Naive thymus-derived CD4-positive, alpha-beta T cell (primary cell): ENCODE measurements at regions of chrX and their contacts with region 1.

Region 1: GRCh38 chrX:112678831-112679230 is 907 bp downstream of the LHFPL1 start:
- DNase-seq: peak in 1 of 9 donors; percentile 8
- ATAC-seq: no peak
- H3K4me3 ChIP-seq: peak overlapping the region; percentile 68
- H3K4me3 Mint-ChIP-seq: peak overlapping the region in 9 of 10 donors; percentile 76 to 87 (median 83)
- H3K27ac ChIP-seq: peak overlapping the region; percentile 69
- H3K27ac Mint-ChIP-seq: peak overlapping the region; percentile 68 to 95 (median 87)
- H3K4me1 ChIP-seq: peaks cover 10 to 13% of the 10 kb centered on the region in 2 donors
- H3K4me1 Mint-ChIP-seq: peaks cover 14 to 50% (median 48%) of the 10 kb centered on the region in 7 donors
- H3K27me3 ChIP-seq: no peaks in the 10 kb centered on the region
- H3K27me3 Mint-ChIP-seq: peaks cover 0 to 2% (median 0%) of the 10 kb centered on the region in 5 donors

Region 2: DNA sequence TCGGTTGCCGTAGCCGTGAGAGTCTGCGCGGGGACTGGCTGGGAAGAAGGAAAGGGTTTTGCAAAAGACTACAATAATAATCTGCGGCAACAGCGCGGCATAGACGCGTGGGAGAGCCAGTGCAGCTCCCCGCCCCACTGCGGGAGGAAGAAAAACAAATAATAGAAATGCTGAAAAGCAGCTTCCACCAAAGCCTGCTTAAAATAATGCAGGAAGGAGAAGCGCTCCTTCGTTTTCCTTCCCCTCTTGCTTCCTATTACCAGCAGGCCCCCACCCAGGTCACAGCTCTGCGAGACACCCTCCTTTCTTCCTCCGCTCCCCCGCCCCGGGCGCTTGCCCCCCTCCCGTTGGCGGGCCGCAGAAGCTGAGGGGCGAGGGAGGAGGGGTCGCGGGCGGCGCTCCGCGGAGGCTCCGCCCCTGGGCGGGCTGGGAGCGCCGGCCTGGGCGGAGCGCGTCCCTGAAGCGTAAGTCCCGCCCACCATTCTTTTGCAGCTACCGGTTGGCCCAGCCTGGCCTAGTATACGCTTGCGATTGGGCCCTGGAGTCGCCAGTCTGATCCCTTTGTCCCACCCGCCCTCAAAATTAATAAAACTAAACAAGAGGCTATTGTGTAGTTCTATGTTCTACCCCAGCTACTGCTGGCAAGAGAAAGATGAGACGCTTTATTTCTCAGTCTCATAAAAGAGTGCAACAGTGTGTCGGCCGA is 162.4 kb after region 1 on chrX:
- CTCF ChIA-PET with region 1: no interaction called
- POLR2A ChIA-PET with region 1: interaction called, 8 read pairs
- intact Hi-C with region 1: loop called (anchors 1 to 2 kb)
- DNase-seq: peak; percentile 55 to 82 (median 75)
- ATAC-seq: peak; percentile 98
- H3K4me3 ChIP-seq: peak overlapping the region; percentile 74
- H3K4me3 Mint-ChIP-seq: peak overlapping the region; percentile 81 to 94 (median 88)
- H3K27ac ChIP-seq: peak overlapping the region; percentile 66
- H3K27ac Mint-ChIP-seq: peak overlapping the region; percentile 51 to 92 (median 79)
- H3K4me1 ChIP-seq: peaks cover 0 to 6% of the 10 kb centered on the region in 2 donors
- H3K4me1 Mint-ChIP-seq: peaks cover 0 to 23% (median 7%) of the 10 kb centered on the region in 7 donors
- H3K27me3 ChIP-seq: no peaks in the 10 kb centered on the region
- H3K27me3 Mint-ChIP-seq: peaks cover 0 to 7% (median 0%) of the 10 kb centered on the region in 5 donors